Uterus (tissue), 4 donors: ENCODE measurements at regions of chr4 and their contacts with region 1.

Region 1: GRCh38 chr4:6327041-6327917 is 57.6 kb downstream of the WFS1 start:
- DNase-seq: peak; percentile 76 to 80
- H3K4me3 ChIP-seq: no peak overlapping the region
- H3K27ac ChIP-seq: no peak overlapping the region
- H3K4me1 ChIP-seq: no peaks in the 10 kb centered on the region
- H3K27me3 ChIP-seq: no peaks in the 10 kb centered on the region
- CTCF ChIP-seq: peak; percentile 97 to 99 (median 98)
- POLR2A ChIP-seq: no peak

Region 2: DNA sequence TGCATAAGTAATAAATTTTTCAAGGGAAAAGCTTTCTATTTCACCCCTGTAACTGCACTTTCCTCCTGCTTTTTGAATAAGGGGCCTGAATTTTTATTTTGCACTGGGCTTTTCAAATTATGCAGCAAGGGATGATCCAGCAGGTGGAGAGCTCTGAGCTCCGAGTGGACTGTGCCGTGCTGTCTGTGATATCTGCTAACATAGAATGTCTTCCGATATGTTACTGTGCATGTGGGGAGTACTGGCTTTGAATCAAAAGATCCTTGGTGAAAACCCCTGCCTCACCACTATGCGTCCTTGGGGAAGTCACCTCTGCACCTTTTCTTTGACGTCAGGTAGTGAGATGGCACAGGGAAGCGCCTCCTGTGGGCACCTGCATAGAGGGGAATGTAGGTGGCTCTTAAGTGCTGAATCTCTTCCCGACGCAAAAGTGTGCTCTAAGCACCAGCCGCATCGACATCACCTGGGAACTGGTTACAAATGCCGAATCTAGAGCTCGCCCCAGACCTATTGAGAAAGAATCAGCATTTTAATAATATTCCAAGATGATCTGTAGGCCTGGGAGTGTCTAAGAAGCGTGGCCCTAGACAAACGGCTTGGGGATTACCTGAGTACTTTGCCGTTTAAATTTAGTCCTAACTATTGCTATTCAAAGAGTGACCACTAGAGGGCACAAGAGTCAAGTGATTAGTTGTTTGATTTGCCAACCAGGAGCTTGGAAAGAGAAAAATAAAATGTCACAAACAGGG is 76.9 kb before region 1 on chr4:
- intact Hi-C with region 1: loop called (anchors 2 kb)
- DNase-seq: no peak
- H3K4me3 ChIP-seq: no peak overlapping the region
- H3K27ac ChIP-seq: no peak overlapping the region
- H3K4me1 ChIP-seq: no peaks in the 10 kb centered on the region
- H3K27me3 ChIP-seq: no peaks in the 10 kb centered on the region
- CTCF ChIP-seq: peak; percentile 76 to 89 (median 86)
- POLR2A ChIP-seq: no peak

Region 3: GRCh38 chr4:6509587-6509986 is 182.3 kb after region 1 on chr4:
- intact Hi-C with region 1: no loop called
- DNase-seq: no peak
- H3K4me3 ChIP-seq: no peak overlapping the region
- H3K27ac ChIP-seq: no peak overlapping the region
- H3K4me1 ChIP-seq: no peaks in the 10 kb centered on the region
- H3K27me3 ChIP-seq: no peaks in the 10 kb centered on the region
- CTCF ChIP-seq: no peak
- POLR2A ChIP-seq: no peak

Region 4: GRCh38 chr4:6546681-6547447 is 219.6 kb after region 1 on chr4:
- intact Hi-C with region 1: loop called (anchors 10 kb)
- DNase-seq: peak in 1 of 2 donors; percentile 34
- H3K4me3 ChIP-seq: no peak overlapping the region
- H3K27ac ChIP-seq: no peak overlapping the region
- H3K4me1 ChIP-seq: no peaks in the 10 kb centered on the region
- H3K27me3 ChIP-seq: no peaks in the 10 kb centered on the region
- CTCF ChIP-seq: peak; percentile 66 to 82 (median 73)
- POLR2A ChIP-seq: no peak